Endothelial cell of umbilical vein (primary cell): ENCODE measurements at regions of chr13 and their contacts with region 1.

Region 1: GRCh38 chr13:95494082-95494681 is 58.3 kb upstream of the CLDN10 start:
- DNase-seq: peak; percentile 85
- H3K4me3 ChIP-seq: no peak overlapping the region
- H3K27ac ChIP-seq: no peak overlapping the region
- H3K4me1 ChIP-seq: no peaks in the 10 kb centered on the region
- H3K27me3 ChIP-seq: no peaks in the 10 kb centered on the region
- CTCF ChIP-seq: peak; percentile 48 to 59
- POLR2A ChIP-seq: no peak

Region 2: DNA sequence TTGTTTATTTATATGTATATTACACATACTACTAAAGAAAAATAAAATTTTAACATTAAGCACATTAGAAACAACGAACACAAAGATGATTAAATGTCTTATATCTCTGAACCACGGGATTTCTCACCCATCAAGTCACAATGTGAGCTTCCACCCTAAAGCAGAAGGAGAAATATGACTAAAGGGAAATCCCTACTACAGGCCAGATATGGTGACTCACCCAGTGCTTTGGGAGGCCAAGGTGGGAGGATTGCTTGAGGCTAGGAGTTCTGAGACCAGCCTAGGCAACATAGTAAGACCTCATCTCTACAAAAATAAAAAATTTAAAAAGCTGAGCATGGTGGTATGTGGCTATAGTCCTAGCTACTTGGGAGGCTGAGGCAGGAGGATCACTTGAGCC is 1039.3 kb before region 1 on chr13:
- CTCF ChIA-PET with region 1: no interaction called
- POLR2A ChIA-PET with region 1: no interaction called
- dilution Hi-C with region 1: no loop called
- intact Hi-C with region 1: no loop called
- DNase-seq: no peak
- H3K4me3 ChIP-seq: no peak overlapping the region
- H3K27ac ChIP-seq: no peak overlapping the region
- H3K4me1 ChIP-seq: no peaks in the 10 kb centered on the region
- H3K27me3 ChIP-seq: no peaks in the 10 kb centered on the region
- CTCF ChIP-seq: no peak
- POLR2A ChIP-seq: no peak

Region 3: GRCh38 chr13:95564733-95565291 is 70.6 kb after region 1 on chr13:
- CTCF ChIA-PET with region 1: interaction called, 28 read pairs
- POLR2A ChIA-PET with region 1: no interaction called
- dilution Hi-C with region 1: no loop called
- intact Hi-C with region 1: no loop called
- DNase-seq: peak; percentile 91
- H3K4me3 ChIP-seq: no peak overlapping the region
- H3K27ac ChIP-seq: peak overlapping the region; percentile 44
- H3K4me1 ChIP-seq: peaks cover 11% of the 10 kb centered on the region
- H3K27me3 ChIP-seq: no peaks in the 10 kb centered on the region
- CTCF ChIP-seq: no peak
- POLR2A ChIP-seq: no peak